Right cardiac atrium (tissue), 5 donors: ENCODE measurements at regions of chr16 and their contacts with region 1.

Region 1: GRCh38 chr16:71412270-71413160 is 29.3 kb downstream of the TLE7 start:
- DNase-seq: peak; percentile 45 to 70 (median 69)
- ATAC-seq: peak; percentile 63 to 71
- H3K4me3 ChIP-seq: no peak overlapping the region
- H3K27ac ChIP-seq: no peak overlapping the region
- H3K4me1 ChIP-seq: no peaks in the 10 kb centered on the region
- H3K27me3 ChIP-seq: no peaks in the 10 kb centered on the region

Region 2: GRCh38 chr16:71499775-71500364 is 87.4 kb after region 1 on chr16:
- intact Hi-C with region 1: loop called in 3 of 4 experiments (anchors 2 to 5 kb)
- DNase-seq: no peak
- ATAC-seq: peak in 1 of 2 donors; percentile 71
- H3K4me3 ChIP-seq: no peak overlapping the region
- H3K27ac ChIP-seq: no peak overlapping the region
- H3K4me1 ChIP-seq: no peaks in the 10 kb centered on the region
- H3K27me3 ChIP-seq: no peaks in the 10 kb centered on the region

Region 3: GRCh38 chr16:71610936-71611871 is 198.7 kb after region 1 on chr16:
- intact Hi-C with region 1: loop called in 3 of 4 experiments (anchors 2 to 5 kb)
- DNase-seq: peak; percentile 65 to 87 (median 85)
- ATAC-seq: peak; percentile 89 to 92
- H3K4me3 ChIP-seq: no peak overlapping the region
- H3K27ac ChIP-seq: no peak overlapping the region
- H3K4me1 ChIP-seq: no peaks in the 10 kb centered on the region
- H3K27me3 ChIP-seq: no peaks in the 10 kb centered on the region